ENCODE measurements at regions of chr18 and their contacts with region 1.

Region 1: GRCh38 chr18:58768293-58768974 is 96.2 kb upstream of the ZNF532 start:
- DNase-seq: peak; percentile 81
- H3K4me3 Mint-ChIP-seq: no peak overlapping the region
- H3K27ac Mint-ChIP-seq: no peak overlapping the region
- H3K4me1 Mint-ChIP-seq: peaks cover 20% of the 10 kb centered on the region
- H3K27me3 Mint-ChIP-seq: peaks cover 83% of the 10 kb centered on the region

Region 2: DNA sequence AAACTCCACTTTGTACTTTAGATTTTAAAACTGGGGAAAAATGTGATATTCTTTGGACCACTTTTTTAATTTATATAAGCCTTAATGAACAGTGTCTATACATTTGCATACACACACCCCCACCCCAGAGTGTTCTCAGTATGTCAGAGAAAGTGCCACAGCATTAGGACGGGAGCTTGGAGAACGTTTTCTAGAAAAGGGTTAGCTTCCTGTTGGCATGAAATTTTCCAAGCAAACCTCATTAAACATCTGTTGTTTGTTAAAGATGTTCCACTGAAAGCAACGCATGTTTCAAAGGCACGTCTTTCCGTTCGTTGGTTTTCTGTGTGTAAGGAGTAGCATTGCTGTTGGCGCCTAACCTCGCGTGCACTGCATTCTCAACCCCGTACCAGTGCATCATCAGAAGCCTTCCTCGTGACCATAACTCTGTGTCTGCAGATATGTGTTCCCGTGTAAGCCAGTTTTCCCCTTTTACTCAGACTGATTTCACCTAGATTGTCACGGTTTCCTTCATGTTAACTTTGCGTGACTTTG is 368.0 kb before region 1 on chr18:
- CTCF ChIA-PET with region 1: interaction called, 13 read pairs
- DNase-seq: peak; percentile 51
- H3K4me3 Mint-ChIP-seq: no peak overlapping the region
- H3K27ac Mint-ChIP-seq: peak overlapping the region; percentile 93
- H3K4me1 Mint-ChIP-seq: peaks cover 40% of the 10 kb centered on the region
- H3K27me3 Mint-ChIP-seq: no peaks in the 10 kb centered on the region

Region 3: GRCh38 chr18:58529714-58530354 is 238.6 kb before region 1 on chr18:
- CTCF ChIA-PET with region 1: interaction called, 351 read pairs
- DNase-seq: peak; percentile 80
- H3K4me3 Mint-ChIP-seq: no peak overlapping the region
- H3K27ac Mint-ChIP-seq: no peak overlapping the region
- H3K4me1 Mint-ChIP-seq: peaks cover 12% of the 10 kb centered on the region
- H3K27me3 Mint-ChIP-seq: peaks cover 41% of the 10 kb centered on the region

Region 4: DNA sequence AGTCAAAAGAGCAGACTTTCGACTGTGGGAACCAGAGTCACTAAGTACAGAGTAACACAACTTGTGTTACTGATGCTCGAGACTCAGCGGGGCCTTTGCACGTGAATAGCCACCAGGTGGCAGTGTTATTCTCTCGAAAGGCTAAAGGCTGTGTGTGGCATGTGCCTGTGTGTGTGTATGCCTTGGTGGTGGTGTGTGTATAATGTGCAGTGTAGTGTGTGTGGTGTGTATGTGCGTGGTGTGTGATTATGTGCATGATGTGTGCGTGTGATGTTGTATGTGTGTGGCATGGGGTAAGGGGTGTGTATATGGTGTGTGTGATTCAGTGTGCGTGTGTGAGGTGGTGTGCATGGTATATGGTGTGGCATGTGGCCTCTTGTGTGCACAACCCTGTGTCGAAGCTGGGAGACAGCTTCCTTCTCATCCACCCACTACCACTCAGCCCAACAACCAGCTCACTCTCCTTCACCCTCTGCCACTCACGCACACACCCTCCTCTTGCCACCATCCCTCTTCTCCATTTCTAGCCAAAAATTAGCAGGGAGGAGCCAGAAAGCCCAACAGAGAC is 13.3 kb after region 1 on chr18:
- CTCF ChIA-PET with region 1: interaction called, 33 read pairs
- DNase-seq: peak; percentile 79
- H3K4me3 Mint-ChIP-seq: no peak overlapping the region
- H3K27ac Mint-ChIP-seq: no peak overlapping the region
- H3K4me1 Mint-ChIP-seq: no peaks in the 10 kb centered on the region
- H3K27me3 Mint-ChIP-seq: peaks cover 61% of the 10 kb centered on the region

Region 5: GRCh38 chr18:59070181-59070912 is 301.9 kb after region 1 on chr18:
- CTCF ChIA-PET with region 1: interaction called, 58 read pairs
- DNase-seq: peak; percentile 86
- H3K4me3 Mint-ChIP-seq: no peak overlapping the region
- H3K27ac Mint-ChIP-seq: no peak overlapping the region
- H3K4me1 Mint-ChIP-seq: no peaks in the 10 kb centered on the region
- H3K27me3 Mint-ChIP-seq: peaks cover 24% of the 10 kb centered on the region